Heart left ventricle (tissue), 16 donors: ENCODE measurements at regions of chr15 and their contacts with region 1.

Region 1: DNA sequence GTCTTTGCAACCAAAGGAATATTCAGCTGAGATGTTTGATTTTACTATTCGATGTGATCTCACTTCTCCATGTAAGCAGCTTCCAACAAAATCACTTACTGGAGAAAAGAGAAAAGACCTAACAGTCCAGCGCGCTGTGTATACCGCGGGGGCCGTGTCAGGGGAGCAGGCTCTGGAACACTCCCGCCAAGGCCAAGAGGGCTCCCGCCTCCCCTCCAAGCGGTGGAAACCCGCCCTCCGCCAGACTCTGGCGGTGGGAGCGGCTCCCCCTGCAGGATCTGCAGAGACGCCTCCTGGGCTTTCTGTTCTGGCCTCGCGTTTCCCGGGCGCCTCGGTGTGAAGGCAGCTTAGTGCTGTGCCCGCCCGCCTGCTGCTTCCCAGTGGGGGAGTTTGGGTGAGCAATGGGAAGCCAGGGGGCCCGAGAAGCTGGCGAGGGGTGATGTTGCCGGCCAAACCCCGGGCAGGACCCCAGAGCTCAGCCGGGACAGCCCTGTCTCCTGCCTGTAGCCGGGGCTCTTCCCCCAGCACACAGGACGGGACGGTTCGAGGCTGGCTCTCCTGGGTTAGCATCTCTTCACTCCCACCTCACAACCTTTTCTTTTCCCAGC is 36.3 kb downstream of the CHST14 start:
- DNase-seq: peak; percentile 78 to 88 (median 83)
- ATAC-seq: peak; percentile 76 to 93 (median 92)
- H3K4me3 ChIP-seq: peak overlapping the region in 10 of 12 donors; percentile 20 to 46 (median 34)
- H3K27ac ChIP-seq: peak overlapping the region in 3 of 12 donors; percentile 31 to 42 (median 35)
- H3K4me1 ChIP-seq: peaks cover 0 to 24% (median 17%) of the 10 kb centered on the region in 12 donors
- H3K27me3 ChIP-seq: peaks cover 0 to 39% (median 0%) of the 10 kb centered on the region in 9 donors
- CTCF ChIP-seq: peak; percentile 59 to 90 (median 70)
- POLR2A ChIP-seq: no peak

Region 2: GRCh38 chr15:40440743-40441564 is 66.1 kb before region 1 on chr15 and contains the start of gene BAHD1:
- intact Hi-C with region 1: loop called in 6 of 10 experiments (anchors 2 to 10 kb)
- DNase-seq: peak; percentile 98 to 99 (median 99)
- ATAC-seq: peak; percentile 91 to 95 (median 92)
- H3K4me3 ChIP-seq: peak within 1 kb of the TSS; percentile 75 to 100 (median 93)
- H3K27ac ChIP-seq: peak within 1 kb of the TSS in 11 of 12 donors; percentile 70 to 86 (median 80)
- H3K4me1 ChIP-seq: peaks cover 7 to 85% (median 53%) of the 10 kb centered on the region in 12 donors
- H3K27me3 ChIP-seq: peaks cover 0 to 27% (median 13%) of the 10 kb centered on the region in 9 donors
- CTCF ChIP-seq: peak in 5 of 12 donors; percentile 3 to 50 (median 7)
- POLR2A ChIP-seq: peak in 1 of 2 donors; percentile 49
- total RNA-seq, gene BAHD1: 12.8 to 28.4 (median 16.1) TPM

Region 3: DNA sequence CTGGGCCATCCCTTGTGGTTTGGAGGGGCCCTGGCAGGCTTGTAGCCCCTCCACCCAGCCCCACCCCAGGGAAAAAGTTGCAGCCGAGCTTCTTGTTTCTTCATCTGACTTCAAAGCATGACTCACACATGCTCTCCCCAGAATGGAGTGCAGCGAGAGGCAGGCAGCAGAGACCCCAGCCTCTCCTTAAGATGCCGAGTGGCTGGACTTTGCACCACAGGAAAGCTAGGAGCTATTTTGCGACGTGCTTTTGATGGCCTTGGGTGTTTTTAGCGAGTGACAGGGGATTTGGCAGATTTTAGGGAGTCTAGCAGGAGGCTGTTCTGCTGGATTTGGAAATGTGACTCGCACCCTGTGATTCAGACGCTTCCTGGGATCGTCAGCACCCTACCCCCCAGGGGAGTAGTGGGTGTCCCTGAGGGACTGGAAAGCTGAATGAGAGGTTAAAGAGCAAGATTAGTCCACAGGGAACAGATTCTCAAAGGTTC is 52.1 kb before region 1 on chr15:
- intact Hi-C with region 1: loop called in 1 of 10 experiments (anchors 5 kb)
- DNase-seq: no peak
- ATAC-seq: no peak
- H3K4me3 ChIP-seq: no peak overlapping the region
- H3K27ac ChIP-seq: no peak overlapping the region
- H3K4me1 ChIP-seq: peaks cover 4 to 66% (median 45%) of the 10 kb centered on the region in 12 donors
- H3K27me3 ChIP-seq: no peaks in the 10 kb centered on the region
- CTCF ChIP-seq: no peak
- POLR2A ChIP-seq: no peak

Region 4: DNA sequence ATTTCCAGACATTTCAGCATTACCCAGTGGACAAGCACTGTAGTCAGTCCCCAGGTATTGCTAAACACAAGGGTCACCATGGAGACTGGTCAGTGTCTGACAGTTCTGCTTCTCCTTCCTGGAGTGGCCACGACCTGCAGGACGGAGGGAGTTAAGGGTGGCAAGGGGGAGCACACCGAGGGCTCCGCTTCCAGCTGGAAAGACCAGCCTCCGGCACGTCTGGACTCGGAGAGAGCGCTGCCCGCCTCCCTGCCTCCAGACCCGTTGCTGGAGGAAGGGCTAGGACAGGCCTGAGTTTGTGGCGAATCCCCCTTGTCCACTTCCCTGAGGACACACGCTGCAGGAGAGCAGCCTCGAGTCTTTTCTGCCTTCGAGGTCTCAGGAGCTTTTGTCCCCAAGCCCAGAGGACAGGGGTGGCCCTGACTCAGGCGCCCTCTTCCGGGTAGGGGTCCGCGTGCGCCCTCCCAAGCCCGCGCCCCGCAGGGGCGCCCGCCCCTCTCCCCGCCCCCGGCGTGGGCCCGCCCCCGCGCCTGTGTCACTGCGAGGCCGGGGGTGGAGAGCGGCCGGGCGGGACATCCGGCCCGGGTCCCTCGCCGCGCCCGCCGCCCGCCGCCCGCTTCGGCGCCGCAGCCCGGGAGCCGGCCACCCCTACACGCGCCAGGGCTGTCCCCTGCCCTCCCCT is 36.5 kb before region 1 on chr15 and contains the start of gene CHST14:
- intact Hi-C with region 1: loop called in 1 of 10 experiments (anchors 1 kb)
- DNase-seq: peak; percentile 57 to 82 (median 75)
- ATAC-seq: peak; percentile 66 to 92 (median 86)
- H3K4me3 ChIP-seq: peak within 1 kb of the TSS; percentile 71 to 95 (median 90)
- H3K27ac ChIP-seq: peak within 1 kb of the TSS; percentile 74 to 94 (median 89)
- H3K4me1 ChIP-seq: peaks cover 0 to 26% (median 14%) of the 10 kb centered on the region in 12 donors
- H3K27me3 ChIP-seq: no peaks in the 10 kb centered on the region
- CTCF ChIP-seq: no peak
- POLR2A ChIP-seq: peak in 1 of 2 donors; percentile 26
- total RNA-seq, gene CHST14: 6.4 to 10.8 (median 8.6) TPM

Region 5: DNA sequence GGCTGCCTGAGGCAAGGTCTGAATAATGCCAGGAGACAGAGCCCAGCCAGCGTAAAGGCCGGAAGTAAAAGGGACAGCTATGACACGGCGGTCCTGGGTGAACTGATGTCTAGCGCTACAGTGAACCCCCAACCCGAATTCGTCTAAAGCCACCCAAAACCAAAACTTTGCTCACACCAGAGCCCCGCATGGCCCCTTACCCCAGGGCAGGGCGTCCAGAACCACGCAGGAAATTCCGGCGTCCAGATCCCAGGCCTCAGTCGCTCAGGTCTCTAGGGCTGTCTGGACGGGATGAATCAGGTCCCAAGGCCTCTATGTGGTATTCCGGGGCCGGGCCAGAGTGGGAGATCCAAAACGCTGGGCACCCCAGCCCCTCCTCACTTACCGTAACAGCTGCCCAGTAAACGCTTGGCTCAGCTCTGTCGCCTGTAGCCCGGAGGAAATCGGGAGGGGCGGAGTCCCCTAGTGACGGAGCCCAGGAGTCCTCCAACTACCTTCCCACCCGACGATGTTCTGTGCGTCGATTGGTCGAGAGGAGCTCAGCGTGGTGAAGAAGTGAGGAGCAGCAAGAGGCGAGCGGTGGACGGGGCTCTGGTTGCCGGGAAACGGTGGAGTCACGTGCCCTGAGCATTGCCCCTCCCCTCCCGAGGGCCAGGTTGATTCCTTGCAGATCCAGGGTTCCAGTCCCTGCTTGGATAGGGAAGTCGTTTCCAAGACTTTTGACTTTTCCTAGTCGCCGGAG is 57.7 kb after region 1 on chr15 and contains the start of gene CCDC32:
- intact Hi-C with region 1: loop called in 1 of 10 experiments (anchors 10 kb)
- DNase-seq: peak; percentile 97 to 99 (median 98)
- ATAC-seq: peak; percentile 98 to 99 (median 98)
- H3K4me3 ChIP-seq: peak within 1 kb of the TSS; percentile 58 to 97 (median 84)
- H3K27ac ChIP-seq: peak within 1 kb of the TSS; percentile 76 to 99 (median 93)
- H3K4me1 ChIP-seq: peaks cover 0 to 46% (median 19%) of the 10 kb centered on the region in 12 donors
- H3K27me3 ChIP-seq: no peaks in the 10 kb centered on the region
- CTCF ChIP-seq: peak in 1 of 12 donors; percentile 17
- POLR2A ChIP-seq: peak in 1 of 2 donors; percentile 88
- total RNA-seq, gene CCDC32: 13.0 to 38.2 (median 23.6) TPM

Region 6: GRCh38 chr15:40593588-40594428 is 86.7 kb after region 1 on chr15 and contains the start of gene KNL1:
- intact Hi-C with region 1: loop called in 1 of 10 experiments (anchors 5 kb)
- DNase-seq: peak; percentile 83 to 94 (median 90)
- ATAC-seq: peak; percentile 95 to 97 (median 96)
- H3K4me3 ChIP-seq: peak within 1 kb of the TSS; percentile 51 to 80 (median 60)
- H3K27ac ChIP-seq: peak within 1 kb of the TSS; percentile 83 to 98 (median 88)
- H3K4me1 ChIP-seq: peaks cover 0 to 24% (median 7%) of the 10 kb centered on the region in 12 donors
- H3K27me3 ChIP-seq: no peaks in the 10 kb centered on the region
- CTCF ChIP-seq: peak in 1 of 12 donors; percentile 0
- POLR2A ChIP-seq: no peak
- total RNA-seq, gene KNL1: 0.11 to 5.9 (median 1.0) TPM in 8 of 9 donors, not detected in the other